ENCODE measurements at regions of chr3 and their contacts with region 1.

Region 1: GRCh38 chr3:2765002-2765579 is 345.1 kb downstream of the IL5RA start:
- DNase-seq: no peak
- CTCF ChIP-seq: no peak

Region 2: DNA sequence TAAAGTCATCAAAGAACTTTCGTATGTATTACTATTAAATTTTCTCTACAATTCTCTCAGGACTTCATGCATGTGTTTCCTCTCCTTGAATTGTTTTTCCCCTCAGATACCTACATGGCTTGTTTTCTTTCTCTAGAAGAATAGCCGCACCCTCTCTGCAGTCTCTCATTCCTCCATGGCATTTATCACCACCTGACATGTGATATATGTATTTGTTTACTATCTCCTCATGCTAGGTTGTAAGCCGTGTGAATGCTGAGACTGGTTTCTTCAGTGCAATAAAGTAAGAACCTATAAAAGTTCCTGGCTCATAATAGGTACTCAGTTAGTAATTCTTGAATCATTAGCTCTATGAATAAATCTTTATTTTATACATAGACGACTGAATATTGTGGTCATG is 517.3 kb before region 1 on chr3:
- in situ Hi-C with region 1: no loop called
- DNase-seq: no peak
- CTCF ChIP-seq: no peak

Region 3: GRCh38 chr3:2847062-2847841 is 82.2 kb after region 1 on chr3:
- in situ Hi-C with region 1: no loop called
- DNase-seq: no peak
- CTCF ChIP-seq: no peak

Region 4: GRCh38 chr3:3015185-3016089 is 250.3 kb after region 1 on chr3:
- in situ Hi-C with region 1: loop called (anchors 25 kb)
- DNase-seq: no peak
- CTCF ChIP-seq: no peak

Region 5: GRCh38 chr3:3170998-3171397 is 405.9 kb after region 1 on chr3:
- in situ Hi-C with region 1: loop called (anchors 25 kb)
- DNase-seq: no peak
- CTCF ChIP-seq: no peak